A549 (cell line): ENCODE measurements at regions of chr5 and their contacts with region 1.

Region 1: DNA sequence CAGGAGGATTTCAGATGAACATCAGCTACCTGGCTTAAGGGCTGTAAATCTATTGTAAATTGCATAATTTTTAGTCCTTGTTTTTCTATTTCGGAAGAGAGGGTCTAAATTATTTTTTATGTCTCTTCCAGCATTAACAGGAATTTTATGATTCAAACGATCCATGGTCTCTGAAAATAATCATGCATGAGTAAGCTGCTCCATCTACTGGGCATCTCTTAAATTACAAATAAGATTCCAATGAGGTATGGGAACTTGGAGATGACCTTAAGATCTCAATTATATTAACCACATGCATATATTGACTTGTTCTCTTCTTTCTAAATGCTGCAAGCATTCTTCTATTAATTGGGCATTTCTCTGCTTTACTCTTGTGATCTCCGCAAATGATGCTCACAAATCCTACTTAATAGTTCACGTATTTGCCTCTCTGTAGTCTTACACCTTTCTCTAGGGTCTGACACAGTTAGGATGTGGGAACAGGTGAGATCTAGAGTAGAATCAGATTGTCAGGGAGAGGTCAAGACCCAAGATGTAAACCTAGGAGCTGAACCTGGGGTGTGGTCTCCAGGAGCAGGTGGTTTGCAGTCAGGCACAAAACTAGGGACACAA is 86.9 kb downstream of the NUDT12 start:
- DNase-seq: peak; percentile 33 to 50
- ATAC-seq: peak; percentile 76 to 88; a peak in 5 of 6 replicates
- H3K4me3 ChIP-seq: no peak overlapping the region
- H3K27ac ChIP-seq: no peak overlapping the region
- H3K4me1 ChIP-seq: peaks cover 17% of the 10 kb centered on the region
- CTCF ChIP-seq: peak; percentile 91
- EP300 ChIP-seq: no peak
- POLR2A ChIP-seq: no peak
- RAD21 ChIP-seq: peak; percentile 90 to 91

Region 2: DNA sequence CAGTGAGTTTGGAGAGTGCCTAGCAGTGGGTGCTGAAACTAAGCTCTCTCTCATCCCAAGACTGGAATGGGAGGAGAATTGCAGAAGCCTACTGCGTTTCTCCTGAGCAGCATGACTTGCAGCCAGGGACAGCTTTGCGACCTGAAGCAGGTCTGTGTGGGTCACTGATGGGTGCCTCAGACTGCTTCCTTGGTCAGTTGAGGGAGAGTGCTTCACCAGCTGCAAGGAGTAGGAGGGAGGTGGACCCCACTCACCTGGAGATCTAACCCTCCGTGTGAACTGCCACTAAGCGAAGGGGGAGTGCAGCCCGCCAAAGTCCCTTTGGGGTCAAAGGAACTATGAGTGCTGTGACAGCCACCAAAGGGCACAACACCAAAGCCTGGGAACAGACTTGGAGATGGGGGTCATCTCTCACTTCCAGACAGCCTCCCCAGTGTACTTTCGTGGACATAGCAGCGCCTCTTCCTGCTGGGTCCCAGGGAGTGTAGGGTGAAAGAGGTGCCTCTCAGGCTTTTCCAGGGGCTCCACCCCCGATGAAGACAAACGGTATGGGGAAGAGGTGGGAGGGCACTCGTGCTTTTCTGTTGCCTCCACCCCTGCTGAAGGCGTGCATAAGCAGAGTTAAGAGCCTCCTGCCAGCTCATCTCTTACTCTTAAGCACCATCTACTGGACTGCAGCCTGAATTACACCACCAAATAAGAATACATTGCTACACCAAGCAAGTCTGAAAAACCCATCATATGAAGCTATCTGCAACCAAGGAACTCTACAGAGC is 251.4 kb before region 1 on chr5:
- CTCF ChIA-PET with region 1: interaction called, 11 read pairs
- POLR2A ChIA-PET with region 1: no interaction called
- DNase-seq: peak in 1 of 2 experiments; percentile 71
- ATAC-seq: peak; percentile 84 to 97
- H3K4me3 ChIP-seq: no peak overlapping the region
- H3K27ac ChIP-seq: no peak overlapping the region
- H3K4me1 ChIP-seq: no peaks in the 10 kb centered on the region
- CTCF ChIP-seq: peak; percentile 53
- EP300 ChIP-seq: no peak
- POLR2A ChIP-seq: no peak
- RAD21 ChIP-seq: peak; percentile 58 to 69

Region 3: DNA sequence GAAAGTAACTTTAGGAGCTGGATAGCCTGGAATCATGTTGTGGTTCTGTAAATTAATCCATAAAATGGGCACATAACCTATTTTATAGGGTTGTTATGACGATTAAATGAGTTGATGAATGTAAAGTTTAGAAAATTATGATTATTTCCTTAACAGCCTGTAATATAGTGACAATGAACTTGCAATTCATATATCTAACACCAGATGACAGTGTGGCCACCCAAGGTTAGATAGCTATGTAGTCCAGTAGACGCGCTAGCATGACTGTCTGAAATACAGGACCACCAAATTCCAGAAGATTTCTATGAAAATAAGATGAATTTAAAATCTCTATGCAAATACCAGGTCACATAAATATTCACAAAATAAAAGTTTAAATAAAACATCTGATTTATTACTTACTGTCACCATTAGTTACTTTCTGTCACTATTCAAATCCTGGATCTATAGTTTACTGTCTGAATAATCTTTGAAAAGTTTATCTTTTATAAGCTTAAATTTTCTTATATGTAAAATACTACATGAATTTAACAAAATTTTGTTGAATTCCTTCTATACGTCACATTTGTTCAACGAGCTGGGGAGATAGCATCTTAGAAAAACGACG is 243.2 kb before region 1 on chr5:
- CTCF ChIA-PET with region 1: interaction called, 20 read pairs
- POLR2A ChIA-PET with region 1: no interaction called
- DNase-seq: peak; percentile 18 to 49
- ATAC-seq: peak; percentile 76 to 95; a peak in 4 of 6 replicates
- H3K4me3 ChIP-seq: no peak overlapping the region
- H3K27ac ChIP-seq: no peak overlapping the region
- H3K4me1 ChIP-seq: no peaks in the 10 kb centered on the region
- CTCF ChIP-seq: peak; percentile 71
- EP300 ChIP-seq: no peak
- POLR2A ChIP-seq: no peak
- RAD21 ChIP-seq: peak; percentile 61 to 67

Region 4: GRCh38 chr5:103258368-103258956 is 217.3 kb before region 1 on chr5 and contains the start of gene MACIR:
- CTCF ChIA-PET with region 1: interaction called, 19 read pairs
- POLR2A ChIA-PET with region 1: interaction called, 32 read pairs
- DNase-seq: peak; percentile 86 to 98
- ATAC-seq: peak; percentile 85 to 94
- H3K4me3 ChIP-seq: peak within 1 kb of the TSS; percentile 90
- H3K27ac ChIP-seq: peak within 1 kb of the TSS; percentile 93 to 95
- H3K4me1 ChIP-seq: peaks cover 34% of the 10 kb centered on the region
- CTCF ChIP-seq: no peak
- EP300 ChIP-seq: no peak
- POLR2A ChIP-seq: peak; percentile 91
- RAD21 ChIP-seq: 0 out of 5 replicates have a peak, but pooled peaks of 1 of the 2 experiments have one; percentile 11
- polyA plus RNA-seq, gene MACIR: 35.3 and 38.8 TPM in 2 replicates

Region 5: DNA sequence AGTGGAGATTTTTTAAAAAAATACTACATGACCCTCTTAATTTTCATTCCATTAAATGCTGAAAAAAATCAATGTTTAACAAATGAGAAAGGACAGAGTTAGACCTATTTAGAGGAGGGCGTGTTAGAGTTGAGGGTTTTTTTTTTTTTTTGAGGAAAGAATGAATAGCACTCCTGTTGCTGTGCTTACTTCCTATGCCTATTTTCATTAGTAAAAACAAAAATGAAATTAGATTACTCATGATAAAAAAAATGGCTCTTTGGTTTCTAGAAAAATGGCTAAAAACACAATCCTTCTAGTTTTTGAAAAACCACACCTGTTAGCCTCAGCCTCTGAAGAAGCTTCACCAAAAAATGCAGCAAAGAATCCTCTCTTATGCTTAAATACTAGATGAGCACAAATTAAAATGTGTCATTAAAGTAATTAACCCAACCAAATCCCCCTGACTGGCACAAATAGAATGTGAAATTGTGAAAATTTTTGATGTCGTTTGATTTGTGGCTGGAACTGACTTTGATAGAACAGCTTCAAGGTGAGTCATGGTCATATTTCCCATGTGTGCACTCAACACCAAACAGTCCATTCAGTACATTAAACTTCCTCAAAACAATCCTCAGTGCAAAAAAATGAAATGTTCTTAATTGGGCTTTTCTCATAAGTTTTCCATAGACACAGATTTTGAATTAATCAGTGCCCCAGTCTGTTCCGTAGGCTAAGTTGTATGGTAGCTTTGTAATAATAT is 119.2 kb before region 1 on chr5:
- CTCF ChIA-PET with region 1: no interaction called
- POLR2A ChIA-PET with region 1: no interaction called
- DNase-seq: no peak
- ATAC-seq: no peak
- H3K4me3 ChIP-seq: no peak overlapping the region
- H3K27ac ChIP-seq: no peak overlapping the region
- H3K4me1 ChIP-seq: no peaks in the 10 kb centered on the region
- CTCF ChIP-seq: no peak
- EP300 ChIP-seq: no peak
- POLR2A ChIP-seq: no peak
- RAD21 ChIP-seq: no peak

Region 6: GRCh38 chr5:103464835-103465484 is 10.8 kb before region 1 on chr5:
- CTCF ChIA-PET with region 1: interaction called, 11 read pairs
- POLR2A ChIA-PET with region 1: no interaction called
- DNase-seq: no peak
- ATAC-seq: peak in 1 of 2 experiments; percentile 61; a peak in 1 of 6 replicates
- H3K4me3 ChIP-seq: no peak overlapping the region
- H3K27ac ChIP-seq: peak overlapping the region; percentile 17 to 37; a peak in 4 of 6 replicates
- H3K4me1 ChIP-seq: peaks cover 27% of the 10 kb centered on the region
- CTCF ChIP-seq: no peak
- EP300 ChIP-seq: no peak
- POLR2A ChIP-seq: no peak
- RAD21 ChIP-seq: no peak

Region 7: GRCh38 chr5:103487218-103487617 is 11.5 kb after region 1 on chr5:
- CTCF ChIA-PET with region 1: interaction called, 10 read pairs
- POLR2A ChIA-PET with region 1: no interaction called
- DNase-seq: no peak
- ATAC-seq: peak in 1 of 2 experiments; percentile 24; a peak in 1 of 6 replicates
- H3K4me3 ChIP-seq: no peak overlapping the region
- H3K27ac ChIP-seq: no peak overlapping the region
- H3K4me1 ChIP-seq: no peaks in the 10 kb centered on the region
- CTCF ChIP-seq: no peak
- EP300 ChIP-seq: no peak
- POLR2A ChIP-seq: no peak
- RAD21 ChIP-seq: no peak

Region 8: GRCh38 chr5:103498211-103498610 is 22.5 kb after region 1 on chr5:
- CTCF ChIA-PET with region 1: no interaction called
- POLR2A ChIA-PET with region 1: no interaction called
- DNase-seq: no peak
- ATAC-seq: no peak
- H3K4me3 ChIP-seq: no peak overlapping the region
- H3K27ac ChIP-seq: no peak overlapping the region
- H3K4me1 ChIP-seq: 0 out of 3 replicates have a peak, but pooled peaks cover 6% of the 10 kb centered on the region
- CTCF ChIP-seq: no peak
- EP300 ChIP-seq: no peak
- POLR2A ChIP-seq: no peak
- RAD21 ChIP-seq: no peak